Activated CD4-positive, alpha-beta T cell treated with anti-CD3 and anti-CD28 coated beads for 36 hours (primary cell): ENCODE measurements at regions of chr17 and their contacts with region 1.

Region 1: DNA sequence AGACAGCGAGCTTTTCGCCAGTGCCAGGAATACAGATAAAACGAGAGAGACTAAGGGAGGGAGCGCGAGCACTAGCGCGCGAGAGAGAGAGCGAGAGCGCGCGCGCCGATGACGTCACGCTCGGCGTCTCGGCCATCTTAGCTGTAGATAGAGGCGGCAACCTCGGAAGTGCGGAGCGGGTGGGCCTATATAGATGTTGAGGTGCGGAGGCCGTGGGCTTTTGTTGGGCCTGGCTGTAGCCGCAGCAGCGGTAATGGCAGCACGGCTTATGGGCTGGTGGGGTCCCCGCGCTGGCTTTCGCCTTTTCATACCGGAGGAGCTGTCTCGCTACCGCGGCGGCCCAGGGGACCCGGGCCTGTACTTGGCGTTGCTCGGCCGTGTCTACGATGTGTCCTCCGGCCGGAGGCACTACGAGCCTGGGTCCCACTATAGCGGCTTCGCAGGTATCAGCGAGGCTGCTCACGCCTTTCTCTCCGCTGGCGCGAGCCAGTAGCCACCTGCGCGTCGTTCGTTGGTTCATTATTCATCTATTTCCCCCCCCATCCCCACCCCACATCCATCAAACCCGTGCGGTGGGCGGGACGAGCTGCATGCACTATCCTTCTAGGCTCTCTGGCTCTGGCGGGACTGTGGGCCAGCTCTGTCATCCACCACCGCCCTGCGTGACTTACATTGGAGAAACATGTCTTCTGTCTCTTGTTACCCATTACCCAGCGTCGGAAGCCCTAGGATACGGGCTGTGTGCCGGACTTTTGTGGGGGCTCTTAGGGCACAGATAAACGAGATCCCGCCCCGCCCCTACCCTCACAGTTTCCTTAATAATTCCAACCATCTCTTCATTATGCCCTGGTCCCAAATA is 795 bp downstream of the CYB5D2 start:
- DNase-seq: peak; percentile 95
- ATAC-seq: peak; percentile 82
- H3K4me3 Mint-ChIP-seq: peak overlapping the region; percentile 97
- H3K27ac Mint-ChIP-seq: peak overlapping the region; percentile 99
- H3K4me1 Mint-ChIP-seq: peaks cover 40% of the 10 kb centered on the region
- H3K27me3 Mint-ChIP-seq: no peaks in the 10 kb centered on the region

Region 2: GRCh38 chr17:2511462-2512369 is 1632.1 kb before region 1 on chr17 and contains the start of gene METTL16:
- CTCF ChIA-PET with region 1: no interaction called
- POLR2A ChIA-PET with region 1: interaction called, 10 read pairs
- intact Hi-C with region 1: no loop called
- DNase-seq: peak; percentile 100
- ATAC-seq: peak; percentile 99
- H3K4me3 Mint-ChIP-seq: no peak within 1 kb of the TSS
- H3K27ac Mint-ChIP-seq: no peak within 1 kb of the TSS
- H3K4me1 Mint-ChIP-seq: peaks cover 17% of the 10 kb centered on the region
- H3K27me3 Mint-ChIP-seq: no peaks in the 10 kb centered on the region
- total RNA-seq, gene METTL16: 50.1 to 61.6 TPM

Region 3: DNA sequence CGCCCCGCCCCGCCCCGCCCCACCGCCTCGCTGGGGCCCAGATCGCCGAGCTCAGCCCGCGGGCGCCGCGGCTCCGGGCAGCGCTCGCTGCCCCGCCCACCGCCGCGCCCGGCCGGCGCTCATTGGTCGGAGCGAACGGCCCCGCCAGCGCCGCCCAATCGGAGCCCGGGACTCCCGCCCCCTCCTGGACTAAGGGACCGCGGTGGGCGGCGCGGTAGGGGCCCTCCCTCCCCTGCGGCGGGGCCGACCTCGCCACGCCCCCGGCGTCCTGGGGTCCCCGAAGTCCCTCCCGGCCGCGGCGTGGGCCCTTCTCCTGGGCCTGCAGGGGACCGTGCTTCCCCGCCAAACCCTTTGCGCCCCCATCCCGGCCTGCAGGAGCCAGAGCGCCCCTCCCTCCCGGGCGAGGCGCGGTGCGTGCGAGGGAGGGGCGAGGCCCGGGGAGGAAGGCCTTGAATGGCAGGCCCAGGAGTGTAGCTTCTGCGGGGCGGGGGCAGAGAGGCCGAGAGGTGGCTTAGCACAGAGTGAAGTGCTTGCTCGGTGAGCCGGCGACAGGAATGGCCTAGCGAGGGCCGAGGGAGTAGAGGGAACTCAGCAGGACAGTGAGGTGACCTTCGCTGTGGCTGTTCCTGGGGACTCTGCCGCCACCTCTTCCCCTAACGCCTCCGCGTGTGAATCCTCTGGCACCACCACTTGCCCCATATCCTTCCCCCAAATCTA is 250.6 kb before region 1 on chr17 and contains the start of gene CAMKK1:
- CTCF ChIA-PET with region 1: interaction called, 3 read pairs
- POLR2A ChIA-PET with region 1: no interaction called
- intact Hi-C with region 1: loop called in 1 of 2 experiments (anchors 1 kb)
- DNase-seq: peak; percentile 94
- ATAC-seq: peak; percentile 88
- H3K4me3 Mint-ChIP-seq: peak within 1 kb of the TSS; percentile 76
- H3K27ac Mint-ChIP-seq: peak within 1 kb of the TSS; percentile 77
- H3K4me1 Mint-ChIP-seq: peaks cover 36% of the 10 kb centered on the region
- H3K27me3 Mint-ChIP-seq: no peaks in the 10 kb centered on the region
- total RNA-seq, gene CAMKK1: 4.5 to 5.4 TPM

Region 4: DNA sequence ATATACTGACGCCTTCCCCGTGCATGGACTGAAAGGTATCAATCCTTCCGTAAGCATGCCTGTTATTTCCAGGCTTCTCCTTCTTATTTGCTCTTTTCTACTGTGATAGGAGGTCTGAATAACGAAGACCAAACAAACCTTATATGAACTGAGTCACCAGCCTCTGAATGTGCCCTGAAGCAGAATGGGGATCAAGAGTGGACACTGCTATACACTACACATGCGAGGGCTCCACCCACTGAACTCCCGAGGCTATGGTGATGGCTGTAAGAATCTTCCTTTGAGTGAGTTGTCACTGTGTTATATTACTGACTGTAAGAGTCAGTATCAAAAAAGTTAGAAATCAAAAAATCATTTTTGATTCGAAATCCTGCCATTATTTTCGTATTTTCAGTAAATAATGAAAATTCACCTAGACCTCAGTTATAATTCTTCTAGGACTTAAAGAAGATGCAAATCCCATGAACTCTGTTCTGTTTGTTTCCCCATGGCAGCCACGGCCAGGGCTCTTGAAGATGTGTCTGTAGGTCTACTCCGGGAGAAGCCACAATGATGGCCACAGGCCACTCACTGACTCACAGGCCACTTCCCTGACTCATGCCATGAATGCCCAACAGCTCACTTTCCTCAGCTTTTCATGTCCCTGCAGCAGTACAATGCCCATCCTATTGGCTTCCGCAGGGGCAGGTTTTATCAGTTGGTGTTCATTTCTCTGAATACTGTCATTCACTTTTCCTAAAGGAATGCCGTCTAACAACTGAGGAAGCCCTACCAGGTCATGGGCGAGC is 55.7 kb before region 1 on chr17:
- CTCF ChIA-PET with region 1: no interaction called
- POLR2A ChIA-PET with region 1: no interaction called
- intact Hi-C with region 1: no loop called
- DNase-seq: no peak
- ATAC-seq: no peak
- H3K4me3 Mint-ChIP-seq: no peak overlapping the region
- H3K27ac Mint-ChIP-seq: no peak overlapping the region
- H3K4me1 Mint-ChIP-seq: peaks cover 9% of the 10 kb centered on the region
- H3K27me3 Mint-ChIP-seq: no peaks in the 10 kb centered on the region

Region 5: GRCh38 chr17:4366327-4367063 is 222.7 kb after region 1 on chr17 and contains the start of gene UBE2G1:
- CTCF ChIA-PET with region 1: no interaction called
- POLR2A ChIA-PET with region 1: interaction called, 4 read pairs
- intact Hi-C with region 1: loop called (anchors 1 kb)
- DNase-seq: peak; percentile 99
- ATAC-seq: peak; percentile 86
- H3K4me3 Mint-ChIP-seq: peak within 1 kb of the TSS; percentile 65
- H3K27ac Mint-ChIP-seq: peak within 1 kb of the TSS; percentile 90
- H3K4me1 Mint-ChIP-seq: peaks cover 29% of the 10 kb centered on the region
- H3K27me3 Mint-ChIP-seq: no peaks in the 10 kb centered on the region
- total RNA-seq, gene UBE2G1: 51.0 to 52.9 TPM

Region 6: DNA sequence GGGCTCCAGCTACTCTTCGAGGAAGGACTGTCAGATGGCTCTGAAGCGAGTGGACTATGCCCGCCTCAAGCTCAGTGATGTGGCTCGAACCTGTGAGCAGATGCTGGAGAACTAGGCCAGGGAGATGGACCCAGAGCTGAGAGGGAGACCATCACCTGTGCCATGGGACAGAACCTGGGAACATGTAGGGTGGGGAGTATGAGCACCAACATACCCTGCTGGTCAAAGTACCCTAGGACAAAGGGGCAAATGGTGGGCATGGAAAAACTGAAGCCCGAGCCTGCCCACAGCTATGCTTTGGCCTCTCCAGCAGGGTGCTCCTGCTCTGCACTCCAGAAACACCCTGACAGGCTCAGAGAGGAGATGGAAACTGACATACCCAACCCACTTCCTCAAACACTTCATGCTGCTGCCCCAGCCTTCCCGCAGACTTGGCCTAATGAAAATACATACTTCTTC is 589.3 kb after region 1 on chr17:
- CTCF ChIA-PET with region 1: no interaction called
- POLR2A ChIA-PET with region 1: no interaction called
- intact Hi-C with region 1: loop called in 1 of 2 experiments (anchors 1 kb)
- DNase-seq: no peak
- ATAC-seq: no peak
- H3K4me3 Mint-ChIP-seq: no peak overlapping the region
- H3K27ac Mint-ChIP-seq: peak overlapping the region; percentile 17
- H3K4me1 Mint-ChIP-seq: peaks cover 39% of the 10 kb centered on the region
- H3K27me3 Mint-ChIP-seq: peaks cover under 1% of the 10 kb centered on the region

Region 7: DNA sequence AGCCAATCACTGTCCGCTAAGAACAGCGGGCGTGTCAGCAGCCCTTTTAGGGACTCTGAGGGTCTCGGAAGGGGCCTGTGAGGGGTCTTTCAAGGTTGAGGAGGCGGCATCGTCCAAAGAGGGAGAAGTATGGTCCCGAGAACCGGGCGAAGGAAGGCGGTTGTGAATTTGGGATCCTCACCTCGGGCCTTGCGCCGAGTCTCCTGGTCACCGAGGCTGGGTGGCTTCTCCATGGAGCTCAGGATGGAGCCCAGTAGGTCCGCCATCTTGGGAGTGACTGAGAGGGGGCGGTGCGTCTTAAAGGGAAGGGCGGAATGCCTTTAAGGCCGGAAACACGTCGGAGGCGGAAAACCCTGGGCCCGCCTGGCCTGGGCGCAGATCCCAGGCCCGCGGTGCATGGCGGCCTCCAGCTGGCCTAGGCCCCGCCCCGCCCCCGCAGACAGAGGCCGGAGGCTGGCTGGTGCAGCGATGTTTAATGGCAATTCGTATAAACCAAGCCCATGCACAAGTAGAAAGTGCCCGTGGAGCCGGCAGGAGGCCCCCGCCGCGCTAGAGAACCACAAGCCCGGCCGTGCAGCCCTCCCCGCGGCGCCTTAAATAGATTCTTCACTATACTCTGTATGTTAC is 823.9 kb after region 1 on chr17 and contains the start of gene SPAG7:
- CTCF ChIA-PET with region 1: no interaction called
- POLR2A ChIA-PET with region 1: no interaction called
- intact Hi-C with region 1: loop called in 1 of 2 experiments (anchors 1 kb)
- DNase-seq: peak; percentile 96
- ATAC-seq: peak; percentile 54
- H3K4me3 Mint-ChIP-seq: no peak within 1 kb of the TSS
- H3K27ac Mint-ChIP-seq: no peak within 1 kb of the TSS
- H3K4me1 Mint-ChIP-seq: peaks cover 40% of the 10 kb centered on the region
- H3K27me3 Mint-ChIP-seq: no peaks in the 10 kb centered on the region
- total RNA-seq, gene SPAG7: 61.4 to 69.4 TPM